Ascending aorta (tissue), 2 donors: ENCODE measurements at regions of chr13 and their contacts with region 1.

Region 1: DNA sequence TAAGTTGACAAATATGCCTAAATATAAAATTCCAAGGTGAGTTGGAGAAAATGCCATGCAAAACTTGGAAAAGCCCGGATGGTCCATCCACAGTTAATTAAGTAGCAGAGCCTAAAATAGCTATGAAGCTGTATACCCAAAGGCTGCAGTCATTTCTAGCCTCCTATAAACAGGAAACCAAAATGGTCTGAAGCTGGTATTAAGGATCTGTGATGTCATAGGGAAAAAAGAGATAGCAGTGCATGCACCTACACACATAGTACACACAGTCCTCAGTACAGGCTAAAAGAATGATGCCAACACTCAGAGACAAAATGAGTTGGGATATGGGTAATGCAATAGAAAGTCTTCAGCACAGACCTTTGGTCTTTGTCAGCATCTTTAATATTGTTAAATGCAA is 736.9 kb downstream of the EFNB2 start:
- DNase-seq: no peak
- H3K4me3 ChIP-seq: no peak overlapping the region
- H3K27ac ChIP-seq: no peak overlapping the region
- H3K4me1 ChIP-seq: no peaks in the 10 kb centered on the region
- H3K27me3 ChIP-seq: no peaks in the 10 kb centered on the region
- CTCF ChIP-seq: no peak

Region 2: DNA sequence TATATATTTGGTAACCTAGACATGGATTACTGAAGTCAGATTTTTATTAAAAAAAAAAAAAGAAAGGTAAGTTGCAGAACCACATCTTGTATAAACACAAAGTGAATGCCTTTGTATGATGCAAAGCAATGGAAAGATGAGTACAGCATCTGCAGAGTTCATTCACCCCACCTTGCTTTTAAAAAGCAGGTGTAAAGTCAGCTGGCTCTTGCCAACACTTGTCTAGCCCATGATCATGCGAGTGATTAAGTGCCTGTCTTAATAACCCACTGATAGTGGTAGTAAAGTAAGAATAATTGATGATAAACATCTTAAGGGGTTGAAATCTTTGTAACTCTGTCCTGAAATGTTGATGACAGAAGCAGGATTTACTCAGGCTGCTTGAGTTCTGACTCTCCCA is 26.5 kb after region 1 on chr13:
- intact Hi-C with region 1: no loop called
- DNase-seq: no peak
- H3K4me3 ChIP-seq: no peak overlapping the region
- H3K27ac ChIP-seq: no peak overlapping the region
- H3K4me1 ChIP-seq: no peaks in the 10 kb centered on the region
- H3K27me3 ChIP-seq: no peaks in the 10 kb centered on the region
- CTCF ChIP-seq: no peak

Region 3: GRCh38 chr13:106520205-106521054 is 721.9 kb after region 1 on chr13:
- intact Hi-C with region 1: loop called (anchors 10 kb)
- DNase-seq: no peak
- H3K4me3 ChIP-seq: no peak overlapping the region
- H3K27ac ChIP-seq: no peak overlapping the region
- H3K4me1 ChIP-seq: peaks cover 0 to 19% of the 10 kb centered on the region in 2 donors
- H3K27me3 ChIP-seq: no peaks in the 10 kb centered on the region
- CTCF ChIP-seq: peak; percentile 43 to 77 (median 56)